Endothelial cell of umbilical vein (primary cell): ENCODE measurements at regions of chr3 and their contacts with region 1.

Region 1: GRCh38 chr3:69451594-69451993 is 65.7 kb upstream of the FRMD4B start:
- DNase-seq: peak; percentile 35
- H3K4me3 ChIP-seq: no peak overlapping the region
- H3K27ac ChIP-seq: no peak overlapping the region
- H3K4me1 ChIP-seq: no peaks in the 10 kb centered on the region
- H3K27me3 ChIP-seq: no peaks in the 10 kb centered on the region
- CTCF ChIP-seq: peak; percentile 23 to 36
- POLR2A ChIP-seq: no peak

Region 2: DNA sequence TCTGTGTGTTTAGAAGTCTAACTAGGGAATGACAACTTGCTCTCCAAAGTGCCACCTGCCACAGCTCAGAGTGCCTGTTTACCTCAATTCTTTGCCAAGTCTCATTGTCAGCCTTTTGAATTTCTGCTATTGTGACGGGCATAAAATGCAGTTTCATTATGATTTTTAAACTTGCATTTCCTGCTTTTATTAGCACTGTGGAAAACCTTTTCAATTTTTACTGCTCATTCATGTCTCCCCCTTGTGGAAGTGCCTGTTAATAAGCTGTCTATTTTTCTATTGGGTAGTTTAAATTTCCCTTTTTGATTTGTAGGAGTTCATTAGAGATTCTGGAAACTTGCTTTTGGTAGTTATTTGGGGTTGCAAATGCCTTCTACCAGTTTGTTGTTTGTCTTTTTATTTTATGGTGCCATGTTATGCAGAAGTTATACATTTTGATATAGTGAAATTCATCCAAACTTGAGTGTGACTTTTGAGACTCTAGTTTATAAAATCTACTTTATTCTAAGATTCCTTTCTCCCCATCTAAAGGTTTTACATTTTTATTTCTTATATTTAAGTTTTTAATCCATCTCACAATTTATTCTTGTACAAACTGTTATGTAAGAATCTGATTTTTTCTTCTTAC is 11.8 kb before region 1 on chr3:
- CTCF ChIA-PET with region 1: interaction called, 57 read pairs
- POLR2A ChIA-PET with region 1: no interaction called
- dilution Hi-C with region 1: no loop called
- intact Hi-C with region 1: no loop called
- DNase-seq: peak; percentile 61
- H3K4me3 ChIP-seq: no peak overlapping the region
- H3K27ac ChIP-seq: no peak overlapping the region
- H3K4me1 ChIP-seq: no peaks in the 10 kb centered on the region
- H3K27me3 ChIP-seq: no peaks in the 10 kb centered on the region
- CTCF ChIP-seq: peak; percentile 41 to 58
- POLR2A ChIP-seq: no peak

Region 3: GRCh38 chr3:69649120-69650065 is 197.8 kb after region 1 on chr3:
- CTCF ChIA-PET with region 1: interaction called, 14 read pairs
- POLR2A ChIA-PET with region 1: no interaction called
- dilution Hi-C with region 1: no loop called
- intact Hi-C with region 1: no loop called
- DNase-seq: peak; percentile 69
- H3K4me3 ChIP-seq: peak overlapping the region in 2 of 3 experiments; percentile 4 to 40
- H3K27ac ChIP-seq: peak overlapping the region; percentile 66
- H3K4me1 ChIP-seq: peaks cover 28% of the 10 kb centered on the region
- H3K27me3 ChIP-seq: no peaks in the 10 kb centered on the region
- CTCF ChIP-seq: no peak
- POLR2A ChIP-seq: no peak

Region 4: DNA sequence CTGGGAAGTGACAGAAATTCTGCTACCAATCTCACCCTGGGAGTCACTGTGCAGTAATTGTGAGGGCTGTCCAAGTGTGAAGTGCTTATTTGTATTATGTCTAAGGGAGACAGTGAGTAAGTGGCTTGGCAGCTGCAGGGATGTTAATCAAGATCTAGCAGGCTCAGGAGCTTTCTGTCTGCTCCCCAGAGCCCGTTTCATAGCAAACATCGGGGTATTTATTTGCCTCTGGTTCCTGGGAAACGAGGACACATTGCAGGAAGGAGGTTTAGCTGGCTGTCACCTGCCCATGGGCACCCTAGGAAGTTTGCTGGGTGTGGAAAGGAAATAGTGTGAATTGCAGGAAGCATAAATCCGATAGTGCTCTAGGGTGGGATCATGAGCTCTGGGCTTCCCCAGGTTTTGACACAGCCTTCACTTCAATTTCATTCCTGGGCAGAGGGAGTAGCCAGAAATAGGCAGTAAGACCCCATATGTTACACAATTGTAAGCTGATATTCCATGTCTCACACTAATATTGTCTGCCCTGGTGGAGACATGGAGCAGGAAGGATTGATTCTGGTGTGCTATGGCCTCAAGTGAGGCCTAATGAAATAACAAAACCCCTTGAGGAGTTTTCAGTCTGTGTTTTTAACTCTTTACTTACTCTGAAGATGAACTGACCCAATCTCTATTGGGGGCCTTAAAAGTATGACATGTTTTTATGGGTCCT is 213.6 kb after region 1 on chr3:
- CTCF ChIA-PET with region 1: interaction called, 57 read pairs
- POLR2A ChIA-PET with region 1: no interaction called
- dilution Hi-C with region 1: no loop called
- intact Hi-C with region 1: no loop called
- DNase-seq: peak; percentile 86
- H3K4me3 ChIP-seq: no peak overlapping the region
- H3K27ac ChIP-seq: peak overlapping the region; percentile 56
- H3K4me1 ChIP-seq: peaks cover 28% of the 10 kb centered on the region
- H3K27me3 ChIP-seq: no peaks in the 10 kb centered on the region
- CTCF ChIP-seq: no peak
- POLR2A ChIP-seq: no peak

Region 5: DNA sequence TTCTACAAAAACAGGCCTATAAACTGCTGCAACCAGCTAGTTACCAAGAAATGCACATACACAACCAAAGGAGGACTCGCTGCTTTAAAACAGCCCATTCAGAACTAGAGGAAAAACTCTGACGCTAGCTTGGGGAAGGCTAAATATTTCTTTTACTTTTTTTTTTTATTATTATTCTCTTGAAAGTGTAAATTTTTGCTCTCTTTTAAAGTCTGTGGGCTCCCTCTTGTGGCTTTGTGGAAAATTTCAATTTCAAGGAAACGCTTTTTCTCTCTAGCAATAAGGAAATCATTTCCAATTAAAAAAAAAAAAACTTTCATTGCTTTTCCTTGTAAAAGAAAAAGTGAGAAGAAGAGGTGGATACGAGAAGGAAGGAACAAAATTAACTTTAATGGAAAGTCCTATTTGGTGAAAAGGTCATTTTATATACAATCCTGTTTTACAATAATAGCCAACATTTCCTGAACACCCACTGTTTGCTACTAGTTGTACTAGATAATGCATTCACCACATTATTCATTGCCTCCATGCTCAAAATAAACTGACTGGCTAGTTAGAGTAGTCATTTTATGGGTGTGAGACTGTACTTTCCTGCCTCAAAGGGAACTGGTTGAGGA is 496.8 kb after region 1 on chr3:
- CTCF ChIA-PET with region 1: no interaction called
- POLR2A ChIA-PET with region 1: no interaction called
- dilution Hi-C with region 1: no loop called
- intact Hi-C with region 1: loop called (anchors 10 kb)
- DNase-seq: peak; percentile 60
- H3K4me3 ChIP-seq: no peak overlapping the region
- H3K27ac ChIP-seq: no peak overlapping the region
- H3K4me1 ChIP-seq: no peaks in the 10 kb centered on the region
- H3K27me3 ChIP-seq: no peaks in the 10 kb centered on the region
- CTCF ChIP-seq: peak; percentile 30 to 39
- POLR2A ChIP-seq: no peak